Activated CD4-positive, alpha-beta T cell treated with anti-CD3 and anti-CD28 coated beads for 36 hours (primary cell): ENCODE measurements at regions of chr11 and their contacts with region 1.

Region 1: DNA sequence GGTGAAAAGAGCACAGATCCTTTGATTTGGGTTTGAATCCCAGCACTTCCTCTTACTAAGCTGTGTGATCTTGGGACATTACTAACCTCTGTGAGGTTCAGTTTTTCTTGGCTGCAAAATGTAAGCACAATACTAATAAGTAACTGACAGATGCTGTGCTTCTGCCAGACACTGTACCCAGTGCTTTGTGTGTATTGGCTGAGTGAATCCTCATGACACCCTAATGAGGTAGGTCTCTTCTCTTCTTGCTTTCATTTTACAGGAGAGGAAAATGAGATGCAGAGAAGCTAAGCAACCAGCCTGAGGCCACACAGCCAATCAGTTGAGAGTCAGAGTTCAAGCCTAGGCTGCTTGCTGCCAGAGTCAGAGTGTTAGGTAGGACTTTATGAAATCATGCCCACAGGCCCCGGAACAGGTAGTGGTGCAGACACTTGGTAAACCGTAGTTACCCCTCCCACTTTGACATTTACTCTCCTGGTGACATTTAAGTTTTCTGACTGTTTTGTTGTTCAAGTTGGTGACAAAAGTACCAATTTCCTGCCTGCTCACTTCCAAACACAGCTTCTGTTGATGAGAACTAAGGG is 21.2 kb downstream of the PTPRJ start:
- DNase-seq: peak; percentile 90
- ATAC-seq: peak; percentile 86
- H3K4me3 Mint-ChIP-seq: peak overlapping the region; percentile 59
- H3K27ac Mint-ChIP-seq: peak overlapping the region; percentile 98
- H3K4me1 Mint-ChIP-seq: peaks cover 85% of the 10 kb centered on the region
- H3K27me3 Mint-ChIP-seq: no peaks in the 10 kb centered on the region

Region 2: DNA sequence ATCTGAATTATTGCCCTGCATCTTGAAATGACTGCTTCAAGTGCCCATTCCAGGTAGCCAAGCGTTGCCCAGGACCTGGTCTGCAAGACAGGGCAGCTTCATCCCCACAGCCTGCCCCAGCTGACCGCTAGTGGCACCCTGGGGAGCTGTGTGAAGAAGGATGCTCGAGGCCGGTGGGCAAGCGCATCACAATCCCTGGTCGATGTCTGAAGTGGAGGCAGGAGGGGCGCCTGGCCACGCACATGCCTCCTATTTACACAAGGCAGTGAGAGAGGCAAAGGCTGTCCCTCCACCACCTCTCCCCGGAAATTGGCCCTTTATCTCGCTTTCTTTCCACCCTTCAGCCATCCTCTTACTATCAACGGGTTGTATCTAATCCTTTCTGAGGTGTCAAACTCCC is 1852.2 kb before region 1 on chr11:
- CTCF ChIA-PET with region 1: no interaction called
- POLR2A ChIA-PET with region 1: no interaction called
- intact Hi-C with region 1: no loop called
- DNase-seq: no peak
- ATAC-seq: no peak
- H3K4me3 Mint-ChIP-seq: no peak overlapping the region
- H3K27ac Mint-ChIP-seq: no peak overlapping the region
- H3K4me1 Mint-ChIP-seq: no peaks in the 10 kb centered on the region
- H3K27me3 Mint-ChIP-seq: no peaks in the 10 kb centered on the region

Region 3: GRCh38 chr11:47407746-47408590 is 593.6 kb before region 1 on chr11 and contains the start of gene SLC39A13:
- CTCF ChIA-PET with region 1: no interaction called
- POLR2A ChIA-PET with region 1: no interaction called
- intact Hi-C with region 1: loop called in 1 of 2 experiments (anchors 5 kb)
- DNase-seq: peak; percentile 95
- ATAC-seq: peak; percentile 91
- H3K4me3 Mint-ChIP-seq: peak within 1 kb of the TSS; percentile 89
- H3K27ac Mint-ChIP-seq: peak within 1 kb of the TSS; percentile 94
- H3K4me1 Mint-ChIP-seq: peaks cover 16% of the 10 kb centered on the region
- H3K27me3 Mint-ChIP-seq: no peaks in the 10 kb centered on the region
- total RNA-seq, gene SLC39A13: 8.6 to 10.7 TPM

Region 4: DNA sequence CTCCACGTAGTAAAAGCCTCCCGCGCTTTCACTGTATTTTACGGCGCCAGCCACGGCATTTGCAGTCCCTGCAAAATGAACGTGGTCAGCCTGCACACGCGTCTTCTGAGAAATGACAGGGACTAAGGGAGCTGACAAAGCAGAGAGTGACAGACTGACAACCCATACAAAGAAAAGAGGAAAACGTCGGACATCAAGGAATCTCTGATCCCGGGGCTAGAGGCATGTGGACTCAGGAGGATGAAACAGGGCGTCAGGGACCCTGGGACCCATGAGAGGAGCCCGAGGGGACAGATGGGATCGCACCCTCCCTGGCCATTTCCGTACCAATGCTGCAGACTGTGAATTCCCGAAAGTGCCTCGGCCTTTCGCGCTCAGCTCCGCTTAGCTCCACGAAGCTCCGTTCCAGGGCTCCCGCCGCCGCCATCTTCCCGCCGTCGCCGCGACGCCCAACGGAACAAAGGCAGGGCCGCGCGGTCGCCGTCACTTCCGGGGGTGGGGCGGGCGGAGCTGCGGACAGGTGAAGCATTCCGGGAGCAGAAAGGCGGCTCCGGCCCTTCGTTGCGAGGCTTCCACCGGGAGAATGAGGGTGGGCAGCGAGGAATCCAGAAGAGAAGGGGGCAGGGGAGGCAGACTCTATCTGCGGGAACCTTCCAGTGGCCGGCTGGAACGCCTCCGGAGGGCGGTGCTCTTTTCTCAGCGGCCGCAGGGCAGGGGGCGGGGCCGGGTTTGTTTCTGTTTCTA is 153.5 kb before region 1 on chr11 and contains the start of gene NUP160:
- CTCF ChIA-PET with region 1: no interaction called
- POLR2A ChIA-PET with region 1: no interaction called
- intact Hi-C with region 1: loop called in 1 of 2 experiments (anchors 5 kb)
- DNase-seq: peak; percentile 94
- ATAC-seq: peak; percentile 88
- H3K4me3 Mint-ChIP-seq: peak within 1 kb of the TSS; percentile 90
- H3K27ac Mint-ChIP-seq: peak within 1 kb of the TSS; percentile 99
- H3K4me1 Mint-ChIP-seq: peaks cover 44% of the 10 kb centered on the region
- H3K27me3 Mint-ChIP-seq: no peaks in the 10 kb centered on the region
- total RNA-seq, gene NUP160: 67.1 to 84.5 TPM

Region 5: GRCh38 chr11:47869546-47870393 is 131.8 kb before region 1 on chr11:
- CTCF ChIA-PET with region 1: no interaction called
- POLR2A ChIA-PET with region 1: no interaction called
- intact Hi-C with region 1: no loop called
- DNase-seq: no peak
- ATAC-seq: no peak
- H3K4me3 Mint-ChIP-seq: no peak overlapping the region
- H3K27ac Mint-ChIP-seq: no peak overlapping the region
- H3K4me1 Mint-ChIP-seq: peaks cover 7% of the 10 kb centered on the region
- H3K27me3 Mint-ChIP-seq: no peaks in the 10 kb centered on the region

Region 6: GRCh38 chr11:47980245-47981049 is 21.1 kb before region 1 on chr11 and contains the start of gene PTPRJ:
- CTCF ChIA-PET with region 1: interaction called, 9 read pairs
- POLR2A ChIA-PET with region 1: interaction called, 3 read pairs
- intact Hi-C with region 1: loop called (anchors 1 kb)
- DNase-seq: peak; percentile 73
- ATAC-seq: peak; percentile 59
- H3K4me3 Mint-ChIP-seq: peak within 1 kb of the TSS; percentile 93
- H3K27ac Mint-ChIP-seq: peak within 1 kb of the TSS; percentile 20
- H3K4me1 Mint-ChIP-seq: peaks cover 30% of the 10 kb centered on the region
- H3K27me3 Mint-ChIP-seq: peaks cover 5% of the 10 kb centered on the region
- total RNA-seq, gene PTPRJ: 20.8 to 21.3 TPM

Region 7: GRCh38 chr11:48055292-48056132 is 54.0 kb after region 1 on chr11:
- CTCF ChIA-PET with region 1: interaction called, 7 read pairs
- POLR2A ChIA-PET with region 1: interaction called, 14 read pairs
- intact Hi-C with region 1: loop called (anchors 1 kb)
- DNase-seq: peak; percentile 80
- ATAC-seq: peak; percentile 93
- H3K4me3 Mint-ChIP-seq: peak overlapping the region; percentile 55
- H3K27ac Mint-ChIP-seq: peak overlapping the region; percentile 89
- H3K4me1 Mint-ChIP-seq: peaks cover 84% of the 10 kb centered on the region
- H3K27me3 Mint-ChIP-seq: no peaks in the 10 kb centered on the region

Region 8: GRCh38 chr11:48081151-48082010 is 79.9 kb after region 1 on chr11:
- CTCF ChIA-PET with region 1: no interaction called
- POLR2A ChIA-PET with region 1: no interaction called
- intact Hi-C with region 1: no loop called
- DNase-seq: peak; percentile 54
- ATAC-seq: peak; percentile 85
- H3K4me3 Mint-ChIP-seq: peak overlapping the region; percentile 3
- H3K27ac Mint-ChIP-seq: peak overlapping the region; percentile 33
- H3K4me1 Mint-ChIP-seq: peaks cover 33% of the 10 kb centered on the region
- H3K27me3 Mint-ChIP-seq: no peaks in the 10 kb centered on the region